Dorsolateral prefrontal cortex (tissue), 120 donors: ENCODE measurements at regions of chr10 and their contacts with region 1.

Region 1: DNA sequence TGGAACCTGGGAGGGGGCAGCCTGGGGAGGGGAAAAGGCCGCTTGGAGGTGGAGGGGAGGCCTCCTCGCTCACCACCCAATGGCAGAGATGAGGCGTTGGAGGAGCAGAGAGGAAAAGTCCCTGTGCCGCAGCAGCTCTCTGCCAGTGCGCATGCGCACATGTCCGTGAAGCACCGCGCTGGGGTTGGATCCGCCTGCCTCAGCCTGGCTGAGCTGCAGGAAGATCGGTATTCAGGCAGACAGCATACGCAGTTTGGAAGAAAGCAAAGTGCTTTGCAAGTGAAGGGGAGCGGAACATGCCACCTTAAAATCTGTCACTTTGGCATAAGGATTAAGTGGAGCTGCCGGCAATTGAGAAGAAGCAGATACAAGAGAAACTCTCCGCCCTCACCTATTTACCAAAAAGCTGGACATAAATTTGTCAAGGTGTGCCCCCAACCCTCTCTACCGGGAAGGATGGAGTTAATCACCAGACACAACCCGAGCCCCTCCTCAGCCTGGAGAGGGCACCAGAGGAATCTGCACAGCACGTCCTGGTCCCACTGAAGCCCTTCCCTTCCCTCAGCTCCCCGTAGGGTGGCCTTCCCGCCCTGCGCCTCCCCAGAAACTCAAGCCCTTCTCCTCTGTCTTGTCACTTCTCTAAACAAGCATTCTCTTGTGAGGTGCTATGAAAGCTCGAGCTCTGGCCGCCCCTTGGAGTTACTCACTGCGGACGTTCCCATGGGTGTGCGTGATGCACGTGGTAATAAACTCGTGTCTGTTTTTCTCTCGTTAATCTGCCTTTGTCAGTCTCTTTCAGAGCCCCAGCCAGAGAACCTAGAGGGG is 32.2 kb upstream of the TMEM72 start:
- DNase-seq: peak; percentile 85 to 95 (median 91)
- H3K4me3 ChIP-seq: peak overlapping the region; percentile 40 to 73 (median 59)
- H3K27ac ChIP-seq: peak overlapping the region in 58 of 59 donors; percentile 7 to 93 (median 78)
- H3K27me3 ChIP-seq: no peaks in the 10 kb centered on the region
- CTCF ChIP-seq: peak in 40 of 56 donors; percentile 4 to 57 (median 32)

Region 2: DNA sequence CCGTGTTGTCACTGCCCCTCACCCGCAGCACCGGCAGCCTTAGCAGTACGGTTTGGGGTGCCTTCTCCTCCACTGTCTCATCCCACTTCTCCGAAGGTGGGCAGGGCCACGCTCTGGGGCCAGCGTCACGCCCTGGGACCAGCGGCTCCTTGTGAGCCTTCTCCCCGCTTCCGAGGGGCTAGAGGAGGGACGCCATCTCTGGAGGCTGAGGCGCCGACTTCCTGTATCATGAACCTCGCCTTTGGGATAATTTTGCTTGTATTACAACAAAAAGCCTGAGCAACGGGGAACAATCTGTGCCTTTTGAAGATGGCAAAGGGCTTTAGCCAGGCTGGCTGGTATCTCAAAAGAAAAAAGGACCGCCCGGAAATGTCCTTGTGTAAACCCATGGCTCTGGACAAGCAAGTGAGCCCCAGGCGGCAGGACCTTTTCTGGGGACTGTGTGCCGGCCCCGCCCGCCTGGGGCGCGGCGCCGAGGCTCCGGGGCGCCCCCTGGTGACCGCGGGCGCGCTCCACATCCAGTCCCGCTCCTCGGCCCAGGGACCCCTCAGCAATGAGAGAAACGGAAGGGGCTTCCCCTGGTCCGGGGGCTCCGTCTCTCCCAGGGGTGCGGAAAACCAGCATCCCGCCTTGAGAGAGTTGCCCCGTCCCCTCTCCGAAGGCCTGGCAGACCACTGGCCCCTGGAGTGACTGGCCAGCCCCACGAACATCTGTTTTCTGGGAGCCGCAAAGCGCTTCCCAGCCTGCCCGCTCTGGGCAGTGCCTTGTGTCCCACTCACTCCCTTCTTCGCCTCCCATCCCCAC is 95.9 kb after region 1 on chr10:
- intact Hi-C with region 1: loop called (anchors 5 to 10 kb)
- DNase-seq: peak in 5 of 10 donors; percentile 54 to 85 (median 70)
- H3K4me3 ChIP-seq: peak overlapping the region in 58 of 59 donors; percentile 5 to 71 (median 46)
- H3K27ac ChIP-seq: peak overlapping the region; percentile 39 to 97 (median 86)
- H3K27me3 ChIP-seq: no peaks in the 10 kb centered on the region
- CTCF ChIP-seq: peak; percentile 86 to 99 (median 98)

Region 3: GRCh38 chr10:44981172-44982113 is 102.5 kb after region 1 on chr10:
- intact Hi-C with region 1: loop called (anchors 5 to 10 kb)
- DNase-seq: peak in 3 of 10 donors; percentile 36 to 47 (median 45)
- H3K4me3 ChIP-seq: peak overlapping the region in 5 of 59 donors; percentile 1 to 16 (median 5)
- H3K27ac ChIP-seq: peak overlapping the region; percentile 60 to 97 (median 91)
- H3K27me3 ChIP-seq: no peaks in the 10 kb centered on the region
- CTCF ChIP-seq: peak in 2 of 56 donors; percentile 8 to 20

Region 4: GRCh38 chr10:45313264-45313873 is 434.5 kb after region 1 on chr10:
- intact Hi-C with region 1: no loop called
- DNase-seq: no peak
- H3K4me3 ChIP-seq: no peak overlapping the region
- H3K27ac ChIP-seq: no peak overlapping the region
- H3K27me3 ChIP-seq: no peaks in the 10 kb centered on the region
- CTCF ChIP-seq: no peak